ENCODE measurements at regions of chr4 and their contacts with region 1.

Region 1: DNA sequence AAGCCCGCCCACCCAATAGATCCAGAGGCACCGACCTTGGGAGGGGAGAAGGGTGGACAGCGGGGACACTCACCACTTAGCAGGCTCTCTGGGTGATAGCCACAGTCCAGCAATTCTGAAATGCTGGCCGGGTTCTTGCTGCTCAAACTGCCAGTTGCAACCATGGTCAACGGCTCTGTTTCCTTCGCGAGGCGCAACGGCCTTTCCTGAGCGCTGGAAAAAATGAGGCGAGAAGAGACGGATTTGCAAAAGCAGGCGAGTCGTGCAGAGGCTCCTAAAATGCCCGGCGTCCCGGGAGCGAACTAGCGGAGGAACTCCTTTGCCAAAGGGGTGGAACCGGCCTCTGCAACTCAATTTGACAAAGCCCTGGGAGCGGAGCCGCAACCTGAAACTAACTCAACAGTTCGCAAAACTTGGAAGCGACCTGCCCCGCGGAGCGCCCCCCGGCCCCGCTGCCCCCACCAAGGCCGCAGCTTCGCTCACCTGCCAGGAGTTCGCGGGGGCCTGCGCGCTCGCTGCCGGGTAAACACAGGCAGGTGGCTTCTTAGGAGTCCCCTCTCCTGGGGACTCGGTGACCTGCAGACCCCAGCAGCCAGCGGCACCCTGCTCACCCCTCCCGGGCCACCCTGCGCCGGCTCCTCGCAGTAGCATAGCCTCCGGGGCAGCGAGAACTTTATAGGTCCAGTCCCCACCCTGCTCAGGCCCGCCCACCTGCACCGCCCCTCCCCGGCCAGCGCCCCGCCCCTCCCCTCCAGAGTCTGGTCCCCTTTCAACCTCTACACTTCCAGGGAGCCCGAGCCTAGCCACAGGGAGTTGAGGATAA is at the start of gene DDIT4L:
- DNase-seq: no peak
- H3K4me3 ChIP-seq: peak within 1 kb of the TSS; percentile 31 to 84 (median 58)
- H3K27ac ChIP-seq: peak within 1 kb of the TSS in 3 of 4 donors; percentile 17 to 65 (median 47)
- H3K4me1 ChIP-seq: peaks cover 4 to 25% (median 12%) of the 10 kb centered on the region in 3 donors
- H3K27me3 ChIP-seq: peaks cover 0 to 32% (median 0%) of the 10 kb centered on the region in 4 donors
- CTCF ChIP-seq: no peak
- POLR2A ChIP-seq: no peak
- total RNA-seq, gene DDIT4L: 0.11 to 1.7 (median 0.30) TPM

Region 2: DNA sequence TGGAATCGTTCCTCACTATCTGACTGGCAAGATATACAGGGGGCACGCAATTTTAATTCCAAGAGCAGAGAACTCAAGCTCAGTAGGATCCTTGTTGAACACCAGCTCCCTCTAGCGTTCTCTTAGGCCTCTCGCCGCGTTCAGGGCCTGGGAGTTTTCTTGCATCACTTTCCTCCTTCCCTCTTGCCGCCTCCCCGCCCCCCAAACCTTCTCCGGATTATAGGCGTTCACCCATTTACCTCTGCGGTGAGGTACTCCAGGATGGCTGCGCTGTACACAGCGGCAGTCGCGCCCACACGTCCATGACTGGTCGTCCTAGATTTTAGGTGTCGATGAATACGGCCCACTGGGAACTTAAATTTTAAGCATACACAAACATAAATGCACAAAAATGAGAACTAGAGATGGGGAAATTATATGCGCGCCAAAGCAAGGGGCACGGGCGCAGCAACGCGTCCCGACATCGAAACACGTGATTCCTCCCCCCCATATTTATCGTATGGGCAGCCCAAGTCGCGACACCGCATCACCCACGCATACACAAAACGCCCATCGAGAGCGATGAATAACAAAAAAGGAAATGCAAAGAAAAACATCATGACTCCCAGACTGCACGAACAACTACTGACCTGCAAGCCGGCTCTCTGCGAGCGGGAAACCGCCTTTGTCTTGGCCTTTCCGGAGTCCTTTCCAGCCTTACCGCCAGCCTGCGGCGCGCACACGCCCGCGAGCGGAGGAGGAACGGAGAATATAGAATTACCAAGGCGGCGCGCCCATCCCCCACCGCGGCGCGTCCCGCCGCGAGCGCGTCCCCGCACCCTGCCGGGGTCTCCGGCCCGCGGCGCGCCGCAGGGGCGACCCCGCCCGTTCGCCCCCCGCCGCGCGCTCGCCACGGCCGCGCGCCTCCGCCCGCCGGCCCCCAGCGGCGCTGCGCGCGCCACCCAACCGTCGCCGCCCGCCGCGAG is 240.7 kb before region 1 on chr4:
- intact Hi-C with region 1: no loop called
- DNase-seq: peak; percentile 68
- H3K4me3 ChIP-seq: peak overlapping the region; percentile 59 to 94 (median 82)
- H3K27ac ChIP-seq: peak overlapping the region; percentile 88 to 98 (median 98)
- H3K4me1 ChIP-seq: peaks cover 16 to 47% (median 23%) of the 10 kb centered on the region in 3 donors
- H3K27me3 ChIP-seq: no peaks in the 10 kb centered on the region
- CTCF ChIP-seq: peak; percentile 84 to 92 (median 88)
- POLR2A ChIP-seq: peak in 1 of 4 donors; percentile 48

Region 3: DNA sequence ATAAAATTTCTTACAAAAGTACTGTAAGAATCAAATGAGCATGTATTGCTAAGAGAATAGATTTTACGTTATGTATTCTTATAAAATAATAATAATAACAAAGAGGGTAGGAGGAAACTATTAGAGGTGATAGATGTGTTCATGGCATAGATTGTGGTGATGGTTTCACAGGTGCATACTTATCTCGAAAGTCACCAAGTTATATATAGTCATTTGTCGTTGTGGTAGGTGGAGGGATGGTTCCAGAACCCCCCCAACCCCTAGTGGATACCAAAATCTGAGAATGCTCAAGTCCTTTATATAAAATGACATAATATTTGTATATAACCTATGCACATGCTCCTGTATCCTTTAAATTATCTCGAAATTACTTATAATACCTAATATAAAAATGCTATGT is 203.2 kb before region 1 on chr4:
- intact Hi-C with region 1: loop called (anchors 10 kb)
- DNase-seq: no peak
- H3K4me3 ChIP-seq: no peak overlapping the region
- H3K27ac ChIP-seq: no peak overlapping the region
- H3K4me1 ChIP-seq: no peaks in the 10 kb centered on the region
- H3K27me3 ChIP-seq: peaks cover 0 to 2% (median 0%) of the 10 kb centered on the region in 4 donors
- CTCF ChIP-seq: no peak
- POLR2A ChIP-seq: no peak

Measured in esophagus squamous epithelium (tissue), 5 donors.